K562 (cell line): ENCODE measurements at regions of chr1 and their contacts with region 1.

Region 1: GRCh38 chr1:12166834-12167492 is at the start of gene TNFRSF1B:
- DNase-seq: peak; percentile 87 to 96 (median 94)
- ATAC-seq: peak; percentile 82
- H3K4me3 ChIP-seq: peak within 1 kb of the TSS; percentile 52
- H3K27ac ChIP-seq: peak within 1 kb of the TSS; percentile 78
- H3K4me1 ChIP-seq: peaks cover 27 to 31% of the 10 kb centered on the region in 2 experiments
- H3K27me3 ChIP-seq: no peaks in the 10 kb centered on the region
- CTCF ChIP-seq: peak in 2 of 3 experiments; percentile 0 to 5; a peak in 1 of 6 replicates
- EP300 ChIP-seq: no peak
- POLR2A ChIP-seq: peak; percentile 75
- RAD21 ChIP-seq: peak in 1 of 2 experiments; percentile 19; a peak in 1 of 4 replicates
- polyA plus RNA-seq, gene TNFRSF1B: 8.8 to 9.0 TPM

Region 2: GRCh38 chr1:12153181-12153785 is 13.7 kb before region 1 on chr1:
- CTCF ChIA-PET with region 1: no interaction called
- POLR2A ChIA-PET with region 1: interaction called, 16 read pairs
- in situ Hi-C with region 1: no loop called
- intact Hi-C with region 1: no loop called
- DNase-seq: no peak
- ATAC-seq: peak; percentile 75
- H3K4me3 ChIP-seq: no peak overlapping the region
- H3K27ac ChIP-seq: no peak overlapping the region
- H3K4me1 ChIP-seq: peaks cover 11 to 17% of the 10 kb centered on the region in 2 experiments
- H3K27me3 ChIP-seq: no peaks in the 10 kb centered on the region; a peak in 1 of 5 replicates
- CTCF ChIP-seq: no peak
- EP300 ChIP-seq: no peak
- POLR2A ChIP-seq: no peak
- RAD21 ChIP-seq: no peak

Region 3: DNA sequence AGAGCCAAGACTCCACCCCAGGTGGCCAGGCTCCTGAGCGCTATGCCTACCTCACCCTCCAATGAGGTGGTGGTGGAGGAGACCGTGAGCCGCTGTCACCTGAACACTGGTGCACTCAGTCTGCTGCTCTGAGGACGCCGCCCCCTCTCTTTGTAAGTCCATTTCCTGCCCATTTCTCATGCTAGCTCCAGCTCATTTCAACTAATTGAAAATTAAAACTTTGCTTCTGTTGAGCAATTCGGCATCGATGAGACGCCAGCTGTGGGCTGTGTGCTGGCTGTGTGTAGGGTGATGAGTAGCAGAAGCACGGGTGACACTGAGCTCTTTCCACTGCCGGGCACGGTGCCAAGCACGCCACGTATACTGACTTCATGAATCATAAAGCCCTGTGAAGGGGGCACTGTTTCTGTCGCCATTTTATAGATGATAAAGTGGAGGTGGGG is 11.1 kb after region 1 on chr1:
- CTCF ChIA-PET with region 1: no interaction called
- POLR2A ChIA-PET with region 1: interaction called, 18 read pairs
- in situ Hi-C with region 1: no loop called
- intact Hi-C with region 1: no loop called
- DNase-seq: no peak
- ATAC-seq: no peak
- H3K4me3 ChIP-seq: no peak overlapping the region
- H3K27ac ChIP-seq: no peak overlapping the region
- H3K4me1 ChIP-seq: peaks cover 25 to 49% of the 10 kb centered on the region in 2 experiments
- H3K27me3 ChIP-seq: no peaks in the 10 kb centered on the region
- CTCF ChIP-seq: no peak
- EP300 ChIP-seq: no peak
- POLR2A ChIP-seq: no peak
- RAD21 ChIP-seq: no peak